HepG2 (cell line): ENCODE measurements at regions of chr7 and their contacts with region 1.

Region 1: GRCh38 chr7:77940647-77941046 is 142.1 kb downstream of the PHTF2 start:
- DNase-seq: peak; percentile 36
- ATAC-seq: no peak; the same call in 2 of the 3 replicates
- H3K4me3 ChIP-seq: no peak overlapping the region
- H3K27ac ChIP-seq: no peak overlapping the region
- H3K4me1 ChIP-seq: peaks cover 17% of the 10 kb centered on the region
- H3K27me3 ChIP-seq: no peaks in the 10 kb centered on the region
- CTCF ChIP-seq: peak; percentile 44
- EP300 ChIP-seq: no peak
- POLR2A ChIP-seq: no peak
- RAD21 ChIP-seq: peak; percentile 25; the same call in 1 of the 2 replicates

Region 2: GRCh38 chr7:78020136-78020873 is 79.7 kb after region 1 on chr7:
- CTCF ChIA-PET with region 1: no interaction called
- POLR2A ChIA-PET with region 1: no interaction called
- in situ Hi-C with region 1: no loop called
- intact Hi-C with region 1: loop called (anchors 5 kb)
- DNase-seq: peak; percentile 51
- ATAC-seq: peak; percentile 87
- H3K4me3 ChIP-seq: peak overlapping the region in 2 of 3 experiments; percentile 59 to 73; a peak in 3 of 6 replicates
- H3K27ac ChIP-seq: no peak overlapping the region
- H3K4me1 ChIP-seq: peaks cover 5% of the 10 kb centered on the region; the same call in 1 of the 2 replicates
- H3K27me3 ChIP-seq: peaks cover 0 to 3% of the 10 kb centered on the region in 2 experiments; a peak in 2 of 5 replicates
- CTCF ChIP-seq: peak; percentile 77
- EP300 ChIP-seq: no peak
- POLR2A ChIP-seq: no peak
- RAD21 ChIP-seq: peak; percentile 23; the same call in 1 of the 2 replicates

Region 3: GRCh38 chr7:78039790-78040776 is 99.4 kb after region 1 on chr7:
- CTCF ChIA-PET with region 1: no interaction called
- POLR2A ChIA-PET with region 1: no interaction called
- in situ Hi-C with region 1: no loop called
- intact Hi-C with region 1: loop called (anchors 1 kb)
- DNase-seq: no peak
- ATAC-seq: peak; percentile 90
- H3K4me3 ChIP-seq: no peak overlapping the region
- H3K27ac ChIP-seq: no peak overlapping the region
- H3K4me1 ChIP-seq: peaks cover 16% of the 10 kb centered on the region
- H3K27me3 ChIP-seq: no peaks in the 10 kb centered on the region
- CTCF ChIP-seq: peak; percentile 74
- EP300 ChIP-seq: no peak
- POLR2A ChIP-seq: no peak
- RAD21 ChIP-seq: peak; percentile 40; the same call in 1 of the 2 replicates

Region 4: DNA sequence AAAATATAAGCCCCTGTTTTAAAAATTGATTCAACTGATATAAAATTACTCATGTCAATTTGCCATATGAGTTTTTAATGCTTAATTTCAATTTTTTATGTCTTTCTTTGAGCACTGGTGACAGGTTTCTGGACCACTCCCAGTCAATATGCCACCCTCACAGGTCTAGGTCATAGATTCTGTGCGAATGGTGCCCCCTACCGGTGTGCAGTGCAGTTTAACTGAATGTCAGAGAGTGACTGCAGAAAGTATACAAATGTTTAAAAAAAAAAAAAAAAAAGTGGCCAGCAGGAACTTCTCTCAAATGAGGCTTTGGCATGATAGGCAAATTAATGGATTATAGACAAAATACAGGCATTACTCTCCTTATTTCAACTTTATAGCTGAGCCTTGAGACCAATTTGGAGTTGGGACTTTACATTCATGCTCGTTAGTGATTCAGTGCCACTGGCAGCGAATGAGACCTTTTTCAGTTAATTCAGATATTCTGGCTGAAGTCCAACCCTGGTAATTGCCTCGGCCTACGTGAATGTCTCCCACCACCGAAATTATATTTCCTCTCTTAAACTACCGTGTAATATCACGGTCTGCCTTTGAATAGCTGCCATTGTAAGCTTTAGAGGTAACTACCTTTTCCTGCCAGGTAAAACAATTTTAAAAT is 285.5 kb after region 1 on chr7:
- CTCF ChIA-PET with region 1: no interaction called
- POLR2A ChIA-PET with region 1: no interaction called
- in situ Hi-C with region 1: no loop called
- intact Hi-C with region 1: loop called (anchors 1 kb)
- DNase-seq: peak; percentile 16
- ATAC-seq: peak; percentile 74
- H3K4me3 ChIP-seq: no peak overlapping the region
- H3K27ac ChIP-seq: no peak overlapping the region
- H3K4me1 ChIP-seq: no peaks in the 10 kb centered on the region
- H3K27me3 ChIP-seq: no peaks in the 10 kb centered on the region
- CTCF ChIP-seq: peak; percentile 69
- EP300 ChIP-seq: no peak
- POLR2A ChIP-seq: no peak
- RAD21 ChIP-seq: no peak

Region 5: DNA sequence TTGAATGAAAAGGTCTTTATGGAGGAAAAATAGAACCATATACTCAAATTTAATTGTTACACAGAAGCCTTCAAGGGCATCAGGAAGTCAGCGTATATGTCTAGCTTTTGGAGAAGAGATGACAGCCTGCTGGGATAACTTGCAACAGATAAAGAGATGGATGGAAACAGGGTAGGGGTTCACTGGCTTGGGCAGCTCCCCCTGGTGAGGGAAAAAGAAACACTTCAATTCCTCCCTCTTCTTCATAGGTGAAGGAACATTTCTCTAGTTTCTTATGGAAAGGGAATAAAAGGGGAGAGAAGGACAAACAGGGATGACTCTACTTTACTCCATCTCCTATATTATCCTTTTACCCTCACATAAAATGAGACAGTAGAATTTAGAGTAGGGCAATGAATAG is 493.6 kb after region 1 on chr7:
- CTCF ChIA-PET with region 1: no interaction called
- POLR2A ChIA-PET with region 1: no interaction called
- in situ Hi-C with region 1: no loop called
- intact Hi-C with region 1: loop called (anchors 5 kb)
- DNase-seq: no peak
- ATAC-seq: peak; percentile 40; the same call in 1 of the 3 replicates
- H3K4me3 ChIP-seq: no peak overlapping the region
- H3K27ac ChIP-seq: no peak overlapping the region
- H3K4me1 ChIP-seq: peaks cover 8% of the 10 kb centered on the region; the same call in 1 of the 2 replicates
- H3K27me3 ChIP-seq: no peaks in the 10 kb centered on the region
- CTCF ChIP-seq: peak; percentile 10; the same call in 1 of the 2 replicates
- EP300 ChIP-seq: no peak
- POLR2A ChIP-seq: no peak
- RAD21 ChIP-seq: no peak